ENCODE measurements at regions of chr18 and their contacts with region 1.

Region 1: GRCh38 chr18:76169733-76170132 is 325.3 kb downstream of the ZNF516 start:
- DNase-seq: no peak
- H3K4me3 ChIP-seq: no peak overlapping the region
- H3K27ac ChIP-seq: no peak overlapping the region
- H3K4me1 ChIP-seq: no peaks in the 10 kb centered on the region
- H3K27me3 ChIP-seq: no peaks in the 10 kb centered on the region
- CTCF ChIP-seq: peak in 1 of 5 experiments; percentile 21
- EP300 ChIP-seq: no peak
- POLR2A ChIP-seq: no peak

Region 2: GRCh38 chr18:75854174-75854573 is 315.6 kb before region 1 on chr18:
- in situ Hi-C with region 1: no loop called
- intact Hi-C with region 1: no loop called
- DNase-seq: peak; percentile 24
- H3K4me3 ChIP-seq: no peak overlapping the region
- H3K27ac ChIP-seq: no peak overlapping the region
- H3K4me1 ChIP-seq: no peaks in the 10 kb centered on the region
- H3K27me3 ChIP-seq: no peaks in the 10 kb centered on the region
- CTCF ChIP-seq: peak; percentile 14 to 43 (median 21)
- EP300 ChIP-seq: no peak
- POLR2A ChIP-seq: no peak

Region 3: DNA sequence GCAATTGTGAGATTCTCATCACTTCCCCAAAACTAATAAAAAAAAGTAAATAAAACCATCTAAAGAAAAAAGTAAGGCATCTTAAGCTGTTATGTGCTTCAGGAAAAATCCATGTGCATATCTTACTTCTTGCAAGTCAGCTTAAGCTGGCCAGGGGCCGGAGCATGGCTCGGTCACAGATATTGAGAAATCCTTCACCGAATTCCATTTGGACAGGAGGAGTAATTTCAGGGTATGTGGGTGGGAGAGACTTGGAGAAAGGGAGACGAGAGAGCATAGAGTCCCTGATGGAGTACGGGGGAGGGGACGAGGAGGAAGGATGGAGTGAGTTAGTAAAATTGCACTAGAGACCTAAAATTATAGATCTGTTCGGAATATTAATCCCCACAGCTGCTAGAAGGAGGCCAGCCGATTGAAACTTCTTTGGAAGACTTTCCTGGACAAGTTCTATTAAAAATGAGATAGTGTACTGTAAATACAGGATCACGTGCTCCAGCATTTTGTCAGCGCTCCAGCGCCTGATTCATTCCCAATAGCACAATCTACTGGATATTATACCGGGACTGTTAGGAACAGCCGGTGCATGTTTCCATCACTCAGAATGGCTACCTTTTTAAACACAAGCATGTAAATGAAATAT is 113.1 kb before region 1 on chr18:
- in situ Hi-C with region 1: loop called in 1 of 4 experiments (anchors 25 kb)
- intact Hi-C with region 1: no loop called
- DNase-seq: peak; percentile 10
- H3K4me3 ChIP-seq: no peak overlapping the region
- H3K27ac ChIP-seq: no peak overlapping the region
- H3K4me1 ChIP-seq: no peaks in the 10 kb centered on the region
- H3K27me3 ChIP-seq: no peaks in the 10 kb centered on the region
- CTCF ChIP-seq: no peak
- EP300 ChIP-seq: no peak
- POLR2A ChIP-seq: no peak

Region 4: GRCh38 chr18:76121011-76121410 is 48.7 kb before region 1 on chr18:
- in situ Hi-C with region 1: no loop called
- intact Hi-C with region 1: no loop called
- DNase-seq: no peak
- H3K4me3 ChIP-seq: no peak overlapping the region
- H3K27ac ChIP-seq: no peak overlapping the region
- H3K4me1 ChIP-seq: no peaks in the 10 kb centered on the region
- H3K27me3 ChIP-seq: no peaks in the 10 kb centered on the region
- CTCF ChIP-seq: no peak
- EP300 ChIP-seq: no peak
- POLR2A ChIP-seq: no peak

Measured in transverse colon (tissue), 4 donors.